Posterior cingulate gyrus (tissue), 11 donors: ENCODE measurements at regions of chr1 and their contacts with region 1.

Region 1: GRCh38 chr1:92831762-92832536 is at the start of gene RPL5:
- DNase-seq: peak; percentile 93 to 99 (median 96)

Region 2: GRCh38 chr1:92749024-92749634 is 82.8 kb before region 1 on chr1:
- intact Hi-C with region 1: loop called (anchors 5 kb)
- DNase-seq: peak in 1 of 10 donors; percentile 53

Region 3: DNA sequence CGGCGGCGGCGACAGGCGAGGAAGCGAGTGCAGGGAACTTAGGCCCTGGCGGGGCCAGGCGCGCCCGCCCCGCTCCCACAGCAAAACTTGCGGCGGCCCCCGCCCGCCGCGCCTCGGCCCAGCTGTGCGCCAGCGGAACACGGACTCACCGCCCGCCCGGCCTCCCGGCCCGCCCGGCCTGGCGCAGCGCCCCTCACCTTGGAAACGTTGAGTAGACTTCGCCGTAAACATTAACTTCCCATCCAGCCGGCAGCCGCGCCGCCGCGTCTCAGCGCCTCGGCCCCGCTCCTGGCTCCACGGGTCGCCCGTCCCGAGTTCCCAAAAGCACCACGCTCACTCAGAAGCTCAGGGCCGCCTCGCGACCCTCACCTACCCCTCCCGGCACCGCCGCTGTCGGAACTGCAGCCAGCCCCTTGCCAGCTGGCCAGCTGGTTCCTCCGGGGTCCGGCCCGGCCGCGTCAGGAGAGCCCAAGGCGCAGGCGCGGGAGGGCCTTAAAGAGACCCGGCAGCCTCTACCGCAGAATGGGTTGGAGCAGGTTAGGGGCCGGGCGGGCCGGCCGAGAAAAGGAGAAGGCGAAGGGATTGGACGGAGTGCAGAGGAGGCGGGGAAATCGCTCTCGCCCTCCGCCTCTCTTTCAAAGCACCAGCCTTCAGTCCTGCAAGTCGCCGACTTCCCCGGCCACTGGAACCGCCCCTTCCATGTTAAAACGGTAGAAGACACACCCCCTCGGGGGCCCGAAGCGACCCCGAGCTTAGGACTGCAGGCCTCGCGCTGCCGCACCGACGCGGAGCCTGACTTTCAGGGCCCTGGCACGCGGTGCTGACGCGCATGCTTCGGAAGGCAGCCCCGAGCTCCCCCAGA is 47.1 kb before region 1 on chr1 and contains the start of gene EVI5:
- intact Hi-C with region 1: loop called (anchors 2 kb)
- DNase-seq: peak; percentile 78 to 98 (median 90)

Region 4: GRCh38 chr1:93196591-93196990 is 364.6 kb after region 1 on chr1:
- intact Hi-C with region 1: no loop called
- DNase-seq: no peak